Lower leg skin (tissue), 4 donors: ENCODE measurements at regions of chr16 and their contacts with region 1.

Region 1: DNA sequence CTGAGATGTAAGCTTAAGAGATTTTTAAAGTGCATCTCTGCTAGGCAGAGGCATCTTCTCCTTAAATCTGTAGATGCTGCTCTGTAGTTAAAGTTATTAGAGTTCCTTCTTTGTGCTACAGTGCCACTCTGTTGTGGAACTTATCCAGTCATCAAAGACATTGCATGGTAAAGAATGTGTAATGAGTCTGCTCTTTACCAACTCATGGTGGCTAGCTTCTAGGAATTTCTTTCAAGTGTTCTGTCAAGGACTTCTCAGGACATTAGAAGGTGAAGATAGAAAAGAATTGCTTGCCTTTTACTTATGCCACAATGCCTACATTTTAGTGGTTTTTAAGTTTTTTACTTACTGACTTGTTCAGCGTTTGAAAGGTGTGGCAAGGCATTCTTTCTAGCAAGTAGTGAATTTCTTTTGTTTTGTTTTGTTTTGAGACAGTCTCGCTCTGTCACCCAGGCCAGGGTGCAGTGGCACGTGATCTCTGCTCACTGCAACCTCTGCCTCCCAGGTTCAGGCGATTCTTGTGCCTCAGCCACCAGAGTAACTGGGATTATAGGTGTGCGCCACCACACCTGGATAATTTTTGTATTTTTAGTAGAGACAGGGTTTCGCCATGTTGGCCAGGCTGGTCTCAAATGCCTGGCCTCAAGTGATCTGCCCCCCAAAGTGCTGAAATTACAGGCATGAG is 20.3 kb upstream of the ARL2BP start:
- DNase-seq: no peak
- H3K4me3 ChIP-seq: no peak overlapping the region
- CTCF ChIP-seq: no peak
- POLR2A ChIP-seq: no peak

Region 2: DNA sequence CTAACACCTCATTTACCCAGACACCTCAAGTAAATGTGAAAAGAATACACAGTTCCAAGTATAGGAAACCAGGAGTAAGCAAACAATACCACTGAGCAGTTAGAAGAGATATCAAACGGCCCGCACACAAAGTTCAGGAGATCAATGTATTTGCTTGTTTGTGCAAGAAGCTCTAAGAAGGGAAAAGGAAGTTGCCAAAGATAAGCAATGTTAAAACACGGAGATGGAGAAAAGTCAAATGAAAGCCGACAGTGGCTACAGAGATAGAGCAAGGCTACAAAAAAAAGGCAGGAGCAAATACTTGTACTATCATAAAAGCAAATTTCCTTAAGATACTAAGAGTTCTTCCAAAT is 68.5 kb before region 1 on chr16:
- intact Hi-C with region 1: no loop called
- DNase-seq: no peak
- H3K4me3 ChIP-seq: no peak overlapping the region
- CTCF ChIP-seq: no peak
- POLR2A ChIP-seq: no peak

Region 3: DNA sequence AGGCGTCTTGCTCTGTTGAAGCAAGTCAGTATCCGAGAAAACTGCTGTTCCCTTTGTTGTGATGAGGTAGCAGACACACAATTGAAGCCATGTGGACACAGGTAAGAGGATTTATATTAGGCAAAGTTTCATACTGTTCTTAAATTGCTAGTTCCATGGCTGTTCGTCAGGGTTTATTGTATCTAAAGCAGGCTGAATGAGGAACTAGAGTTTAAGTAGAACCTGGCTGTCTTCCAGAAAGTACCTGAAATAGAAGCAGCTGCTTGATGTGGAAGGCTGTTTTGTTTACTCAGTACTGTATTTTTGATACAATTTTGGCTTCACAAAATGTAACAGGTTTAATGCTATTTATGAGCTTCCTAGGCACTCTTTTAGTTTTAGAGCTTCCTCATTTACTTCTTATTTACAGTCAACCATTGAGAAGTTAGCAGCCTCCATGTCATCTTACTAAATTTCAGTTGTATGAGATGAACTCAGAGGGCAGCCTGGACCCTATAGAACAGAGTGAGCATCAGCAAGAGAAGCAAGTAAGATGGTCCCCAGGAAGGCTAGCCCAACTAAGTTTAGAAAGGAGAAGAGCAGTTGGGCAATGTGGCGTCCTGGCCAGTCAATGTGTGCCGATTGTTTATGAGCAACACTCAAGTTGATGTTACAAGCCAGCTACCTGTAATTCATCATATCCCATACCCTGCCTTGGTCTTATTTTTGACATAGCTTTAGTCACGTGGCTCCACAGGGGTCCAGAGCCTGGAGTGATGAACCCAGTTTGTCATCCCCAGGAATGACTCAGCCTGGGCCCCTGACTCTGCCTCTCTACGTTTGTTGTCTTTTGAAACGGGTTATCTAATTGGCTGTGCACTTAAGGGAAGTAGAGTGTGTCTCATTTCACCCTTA is 10.6 kb after region 1 on chr16:
- intact Hi-C with region 1: loop called (anchors 2 kb)
- DNase-seq: no peak
- H3K4me3 ChIP-seq: no peak overlapping the region
- CTCF ChIP-seq: no peak
- POLR2A ChIP-seq: no peak